MCF 10A (cell line): ENCODE measurements at regions of chr20 and their contacts with region 1.

Region 1: GRCh38 chr20:24007073-24007595 is 18.6 kb upstream of the GGTLC1 start:
- DNase-seq: no peak
- H3K4me3 Mint-ChIP-seq: no peak overlapping the region
- H3K27ac Mint-ChIP-seq: no peak overlapping the region
- H3K4me1 Mint-ChIP-seq: no peaks in the 10 kb centered on the region
- H3K27me3 Mint-ChIP-seq: no peaks in the 10 kb centered on the region
- CTCF ChIP-seq: no peak

Region 2: DNA sequence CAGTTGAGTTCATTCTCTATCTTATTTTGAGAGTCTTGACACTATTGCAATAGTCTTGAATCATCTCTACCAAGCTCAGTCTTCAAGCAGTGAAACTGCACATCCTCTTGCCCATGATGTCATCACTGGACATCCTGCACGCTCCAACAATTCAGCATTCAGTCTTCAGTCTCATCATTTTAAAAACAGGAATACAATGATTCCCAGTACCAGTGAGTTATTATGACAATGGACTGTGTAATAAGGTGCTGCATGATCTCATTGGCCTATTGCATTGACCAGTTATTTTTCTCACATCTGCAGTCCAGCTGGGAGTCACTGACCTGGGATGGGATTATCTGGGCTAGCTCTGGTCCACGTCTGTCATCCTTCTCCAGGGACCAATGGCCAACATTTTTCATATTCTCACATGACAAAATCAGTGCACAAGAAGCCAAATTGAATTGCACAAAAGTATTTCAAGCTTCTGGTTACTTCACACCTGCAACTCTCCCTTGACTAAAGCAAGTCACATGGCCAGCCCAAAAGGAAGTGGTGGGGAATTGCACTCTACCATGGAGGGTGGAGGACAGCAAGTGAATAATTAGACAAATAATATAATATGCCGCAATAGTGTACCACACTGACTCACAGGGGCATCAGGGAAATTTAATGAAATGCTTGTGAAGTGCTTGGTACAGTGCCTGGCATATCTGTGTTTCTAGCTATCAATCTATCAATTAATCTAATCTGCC is 174.2 kb before region 1 on chr20:
- CTCF ChIA-PET with region 1: no interaction called
- POLR2A ChIA-PET with region 1: no interaction called
- intact Hi-C with region 1: no loop called
- DNase-seq: no peak
- H3K4me3 Mint-ChIP-seq: no peak overlapping the region
- H3K27ac Mint-ChIP-seq: no peak overlapping the region
- H3K4me1 Mint-ChIP-seq: no peaks in the 10 kb centered on the region
- H3K27me3 Mint-ChIP-seq: no peaks in the 10 kb centered on the region
- CTCF ChIP-seq: no peak

Region 3: DNA sequence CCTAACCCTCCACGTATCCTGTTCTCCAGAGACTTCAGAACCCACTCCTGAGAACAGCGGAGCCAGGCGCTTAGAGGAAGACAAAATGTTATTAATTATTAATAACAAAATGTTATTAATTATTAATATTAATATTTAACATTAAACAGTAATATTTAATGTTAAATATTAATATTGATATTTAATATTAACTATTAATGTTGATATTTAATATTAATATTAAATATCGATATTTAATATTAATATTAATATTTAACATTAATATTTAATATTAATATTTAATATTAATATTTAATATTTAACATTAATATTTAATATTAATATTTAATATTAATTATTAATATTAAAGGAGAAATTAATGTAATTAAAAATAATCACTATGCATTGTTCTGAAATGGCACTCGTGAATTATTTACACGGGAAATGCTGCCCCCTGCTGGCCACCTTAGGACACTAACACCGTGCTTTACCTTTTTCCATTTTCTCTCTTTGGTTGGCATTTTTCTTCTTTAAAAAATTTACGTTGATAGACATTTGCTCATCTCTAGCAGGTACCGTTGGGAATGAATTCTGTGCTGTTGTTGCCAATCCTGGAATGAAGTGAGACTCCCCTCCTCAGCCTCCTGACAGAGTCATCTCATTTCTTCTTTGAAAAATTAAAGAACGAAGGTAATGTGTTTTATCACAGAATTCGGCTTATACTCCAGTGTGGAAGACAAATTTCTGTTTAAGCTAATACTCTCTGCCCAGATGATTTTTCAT is 11.0 kb before region 1 on chr20:
- CTCF ChIA-PET with region 1: interaction called, 19 read pairs
- POLR2A ChIA-PET with region 1: no interaction called
- intact Hi-C with region 1: no loop called
- DNase-seq: peak; percentile 43
- H3K4me3 Mint-ChIP-seq: no peak overlapping the region
- H3K27ac Mint-ChIP-seq: no peak overlapping the region
- H3K4me1 Mint-ChIP-seq: no peaks in the 10 kb centered on the region
- H3K27me3 Mint-ChIP-seq: no peaks in the 10 kb centered on the region
- CTCF ChIP-seq: peak; percentile 65

Region 4: DNA sequence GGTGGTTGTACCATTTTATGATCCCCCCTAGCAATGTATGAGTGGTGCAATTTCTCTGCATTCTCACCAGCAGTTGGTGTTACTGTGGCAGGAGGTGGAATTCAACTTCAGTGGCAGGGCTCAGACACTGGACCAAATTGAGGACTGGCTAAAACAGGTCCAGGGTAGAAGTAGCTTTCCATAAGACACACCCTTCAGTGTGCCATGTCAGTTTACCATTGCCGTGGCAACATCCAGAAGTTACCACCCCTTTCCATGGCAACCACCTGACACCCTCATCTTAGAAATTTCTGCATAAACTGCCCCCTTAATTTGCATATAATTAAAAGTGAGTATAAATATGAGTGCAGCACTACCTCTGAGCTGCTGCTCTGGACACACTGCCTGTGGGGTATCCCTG is 162.1 kb after region 1 on chr20:
- CTCF ChIA-PET with region 1: no interaction called
- POLR2A ChIA-PET with region 1: no interaction called
- intact Hi-C with region 1: no loop called
- DNase-seq: no peak
- H3K4me3 Mint-ChIP-seq: no peak overlapping the region
- H3K27ac Mint-ChIP-seq: no peak overlapping the region
- H3K4me1 Mint-ChIP-seq: no peaks in the 10 kb centered on the region
- H3K27me3 Mint-ChIP-seq: no peaks in the 10 kb centered on the region
- CTCF ChIP-seq: no peak